GM10248 (cell line): ENCODE measurements at regions of chr4 and their contacts with region 1.

Region 1: DNA sequence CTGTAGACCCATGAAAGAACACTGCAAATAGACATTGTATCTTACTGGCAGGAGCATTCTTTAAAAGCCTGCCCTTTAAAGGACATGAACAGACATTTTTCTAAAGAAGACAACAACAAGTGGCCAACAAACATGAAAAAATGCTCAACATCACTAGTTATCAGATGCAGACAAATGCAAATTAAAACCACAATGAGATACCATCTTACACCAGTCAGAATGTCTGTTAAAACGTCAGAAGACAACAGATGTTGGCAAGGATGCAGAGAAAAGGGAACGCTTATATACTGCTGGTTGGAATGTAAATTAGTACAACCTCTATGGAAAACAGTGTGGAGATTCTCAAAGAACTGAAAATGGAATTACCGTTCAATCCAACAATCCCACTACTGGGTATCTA is 77.2 kb downstream of the ATP10D start:
- DNase-seq: no peak
- CTCF ChIP-seq: no peak

Region 2: DNA sequence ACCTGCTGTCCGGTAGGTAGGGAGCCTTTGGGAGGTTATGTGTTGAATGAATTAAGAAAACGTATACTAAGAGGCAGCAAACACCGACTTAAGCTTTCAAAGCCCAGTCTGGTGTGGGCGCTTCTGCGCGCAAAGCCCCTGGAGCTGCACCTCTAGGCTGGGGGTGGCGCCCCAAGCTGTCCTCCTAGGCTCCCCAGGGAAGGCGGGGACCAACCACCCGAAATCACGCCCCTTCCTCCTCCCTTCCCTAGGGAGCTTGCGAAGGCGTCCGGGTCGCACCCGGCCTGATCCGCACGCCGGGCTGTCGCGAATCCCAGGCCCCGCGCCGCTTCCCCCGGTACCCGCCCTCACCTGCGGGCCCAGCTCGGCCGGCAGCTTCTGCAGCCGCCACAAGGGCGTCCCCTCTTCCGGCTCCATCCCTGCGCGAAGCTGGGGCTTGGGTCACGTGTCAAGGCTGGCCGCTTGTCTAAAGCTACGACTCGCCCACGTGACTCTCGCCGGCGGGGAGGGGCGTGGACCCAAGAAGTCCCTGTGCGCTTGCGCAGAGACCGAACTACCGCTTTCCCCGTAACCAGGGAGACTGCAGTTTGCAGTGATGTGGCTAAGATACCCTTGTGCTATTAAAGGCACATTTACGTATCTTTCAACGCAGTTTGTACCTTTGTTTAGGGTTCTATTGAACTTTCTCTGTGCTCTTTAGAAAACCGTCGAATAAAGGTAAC is 98.9 kb before region 1 on chr4 and contains the start of gene COMMD8:
- CTCF ChIA-PET with region 1: interaction called, 15 read pairs
- POLR2A ChIA-PET with region 1: no interaction called
- DNase-seq: peak; percentile 95
- CTCF ChIP-seq: peak; percentile 33

Region 3: GRCh38 chr4:47485047-47485692 is 77.1 kb before region 1 on chr4 and contains the start of gene ATP10D:
- CTCF ChIA-PET with region 1: interaction called, 19 read pairs
- POLR2A ChIA-PET with region 1: no interaction called
- DNase-seq: peak; percentile 85
- CTCF ChIP-seq: no peak

Region 4: GRCh38 chr4:47493238-47494123 is 68.8 kb before region 1 on chr4:
- CTCF ChIA-PET with region 1: interaction called, 14 read pairs
- POLR2A ChIA-PET with region 1: no interaction called
- DNase-seq: no peak
- CTCF ChIP-seq: no peak

Region 5: DNA sequence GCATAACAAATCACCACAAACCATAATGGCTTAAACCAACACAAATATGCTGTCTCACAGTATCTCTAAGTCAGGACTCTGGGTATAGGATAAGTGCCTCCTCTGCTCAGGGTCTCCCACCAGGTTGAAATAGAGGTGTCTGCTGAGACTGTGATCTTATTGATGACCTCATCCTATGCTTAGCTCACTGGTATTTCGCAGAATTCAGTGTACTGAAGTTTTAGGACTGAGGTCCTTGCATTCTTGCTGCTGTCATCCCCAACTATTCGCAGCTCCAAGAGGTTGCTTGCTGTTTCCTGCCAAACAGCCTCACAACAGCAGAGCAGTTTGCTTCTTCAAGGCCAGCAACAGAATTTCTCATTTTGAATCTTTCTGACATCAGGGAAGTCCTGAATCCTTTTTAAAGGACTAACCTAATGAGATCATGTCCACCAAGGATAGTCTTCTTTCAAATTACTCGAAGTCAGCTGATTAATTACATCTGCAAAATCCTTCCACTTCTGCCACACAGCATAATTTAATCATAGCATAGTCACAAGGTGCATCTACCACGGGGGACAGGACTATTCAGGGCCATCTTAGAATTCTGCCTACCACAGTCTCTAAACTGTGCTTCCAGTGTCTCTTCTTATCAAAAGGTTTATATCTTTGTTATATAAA is 23.7 kb before region 1 on chr4:
- CTCF ChIA-PET with region 1: interaction called, 19 read pairs
- POLR2A ChIA-PET with region 1: no interaction called
- DNase-seq: no peak
- CTCF ChIP-seq: no peak

Region 6: DNA sequence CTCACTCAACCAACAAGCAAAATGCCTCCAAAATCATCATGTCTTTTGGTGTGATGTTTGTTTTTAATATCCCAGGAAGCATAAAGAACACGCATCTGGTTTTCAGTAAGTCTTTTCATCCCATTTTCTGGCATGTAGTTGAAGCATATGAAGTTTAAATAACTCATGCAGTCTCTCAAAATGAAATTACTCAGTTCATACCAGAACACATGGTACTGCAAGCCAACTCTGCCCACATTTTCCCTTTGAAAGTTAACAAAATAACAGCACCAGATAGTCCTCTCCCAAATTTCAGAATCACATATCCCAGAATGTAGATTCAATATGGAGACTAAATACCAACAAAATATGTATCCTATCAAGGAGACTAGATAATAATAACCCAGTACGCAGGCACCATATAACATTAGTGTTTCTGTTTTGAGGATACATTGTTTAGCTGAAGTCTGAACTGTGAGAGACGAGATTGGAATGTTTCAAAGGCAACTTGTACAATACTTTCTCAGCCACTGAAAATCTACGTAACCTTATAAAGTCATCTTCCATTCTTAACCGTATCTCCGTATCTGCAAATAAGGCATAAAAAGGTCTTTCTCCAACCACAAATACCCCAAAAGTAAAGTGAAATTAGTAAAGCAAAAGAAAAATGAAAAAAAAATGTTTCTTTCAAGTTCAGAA is 252.5 kb after region 1 on chr4:
- CTCF ChIA-PET with region 1: no interaction called
- POLR2A ChIA-PET with region 1: no interaction called
- DNase-seq: no peak
- CTCF ChIP-seq: no peak